ENCODE measurements at regions of chr9 and their contacts with region 1.

Region 1: DNA sequence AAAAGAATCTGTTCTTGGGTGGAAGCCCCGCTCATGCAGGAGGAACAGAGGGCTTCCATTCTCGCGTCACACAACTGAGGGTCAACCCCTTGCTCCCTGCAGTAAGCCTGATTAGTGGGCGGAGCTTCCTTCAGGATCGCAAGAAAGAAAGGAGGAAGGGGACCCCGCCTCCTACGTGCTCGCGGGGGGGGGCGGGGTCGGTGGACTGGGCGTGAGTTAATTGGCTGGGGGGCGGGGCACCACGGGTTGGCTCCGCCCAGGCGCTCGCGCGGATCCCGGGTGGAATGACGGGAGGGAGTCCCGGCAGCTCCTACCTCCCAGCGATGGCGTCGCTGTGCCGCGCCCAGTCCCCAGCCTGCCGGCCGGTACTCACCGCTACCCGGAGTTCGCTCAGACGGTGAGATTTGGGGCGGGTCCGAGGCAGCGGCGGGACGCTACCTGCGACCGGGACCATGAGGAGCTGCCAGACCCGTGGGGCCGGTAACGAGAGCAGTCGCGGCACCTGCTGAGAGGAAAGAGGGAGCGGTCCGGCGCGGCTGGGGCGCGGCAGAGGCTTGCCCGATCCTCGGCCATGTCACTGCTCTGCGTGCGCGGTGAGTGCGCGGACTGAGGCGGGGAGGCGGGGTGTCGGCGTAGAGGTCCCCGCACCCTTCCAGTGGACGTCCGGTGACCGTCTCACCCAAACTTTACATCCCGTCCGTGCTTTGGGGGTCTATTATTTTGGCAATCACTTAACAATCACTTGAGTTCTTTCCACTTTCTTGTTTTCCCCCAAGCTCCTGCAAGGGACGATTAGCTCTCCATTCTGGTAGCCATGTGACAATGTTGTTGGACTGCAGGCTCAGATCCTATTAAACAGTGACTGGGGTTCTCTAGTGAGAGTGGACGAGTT is at the start of gene UNC13B:
- DNase-seq: peak; percentile 96 to 97
- ATAC-seq: peak; percentile 98 to 100 (median 99)
- H3K4me3 ChIP-seq: peak within 1 kb of the TSS; percentile 61 to 93 (median 78)
- H3K27ac ChIP-seq: peak within 1 kb of the TSS; percentile 88 to 98 (median 94)
- H3K4me1 ChIP-seq: peaks cover 0 to 36% (median 21%) of the 10 kb centered on the region in 9 donors
- H3K27me3 ChIP-seq: peaks cover 0 to 6% (median 0%) of the 10 kb centered on the region in 7 donors
- CTCF ChIP-seq: peak in 5 of 9 donors; percentile 20 to 53 (median 39)
- total RNA-seq, gene UNC13B: 13.7 to 27.1 (median 19.9) TPM

Region 2: DNA sequence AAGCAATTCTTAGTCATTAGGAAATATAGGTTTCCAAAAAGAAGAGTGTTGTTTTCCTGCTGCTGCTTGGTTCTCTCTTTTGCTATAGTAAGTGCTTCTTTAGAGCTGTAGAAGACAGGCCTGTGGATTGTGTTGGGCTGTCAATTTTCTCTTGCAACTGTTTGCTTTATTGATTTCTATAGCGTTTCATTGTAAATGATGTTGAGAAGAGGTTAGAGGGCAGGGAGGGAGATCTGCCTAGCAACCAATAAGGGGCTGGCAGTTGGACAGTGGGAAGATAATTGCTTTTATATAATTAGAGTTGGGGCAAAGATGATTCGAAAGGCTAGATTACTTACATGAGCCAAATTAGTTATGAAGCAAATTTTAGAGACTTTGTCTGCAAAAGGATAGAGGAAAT is 10.9 kb after region 1 on chr9:
- intact Hi-C with region 1: loop called in 1 of 10 experiments (anchors 1 kb)
- DNase-seq: no peak
- ATAC-seq: no peak
- H3K4me3 ChIP-seq: no peak overlapping the region
- H3K27ac ChIP-seq: no peak overlapping the region
- H3K4me1 ChIP-seq: peaks cover 0 to 26% (median 8%) of the 10 kb centered on the region in 9 donors
- H3K27me3 ChIP-seq: no peaks in the 10 kb centered on the region
- CTCF ChIP-seq: no peak

Region 3: DNA sequence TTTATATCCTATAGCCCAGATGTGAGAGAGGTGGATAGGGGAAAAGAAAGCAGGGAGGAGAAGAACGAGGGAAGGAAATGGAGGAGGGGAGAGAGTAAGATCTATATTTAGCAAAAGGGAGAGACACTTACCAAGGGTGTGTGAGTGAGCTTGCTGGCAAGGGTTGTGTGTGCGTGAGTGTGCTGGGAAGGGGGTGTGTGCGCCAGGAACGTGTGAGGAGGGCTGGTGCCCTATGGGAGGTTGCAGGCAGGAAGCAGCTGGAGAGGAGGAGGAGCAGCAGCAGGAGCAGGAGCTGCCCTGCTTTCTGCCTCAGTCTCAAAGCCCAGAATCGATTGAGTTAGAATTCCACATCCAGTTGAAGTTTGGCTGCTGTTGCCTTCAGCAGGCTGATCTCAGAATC is 179.6 kb after region 1 on chr9:
- intact Hi-C with region 1: loop called in 1 of 10 experiments (anchors 10 kb)
- DNase-seq: peak; percentile 59 to 70
- ATAC-seq: peak; percentile 76 to 99 (median 94)
- H3K4me3 ChIP-seq: peak overlapping the region in 9 of 10 donors; percentile 12 to 42 (median 33)
- H3K27ac ChIP-seq: peak overlapping the region in 9 of 10 donors; percentile 35 to 70 (median 52)
- H3K4me1 ChIP-seq: peaks cover 5 to 57% (median 33%) of the 10 kb centered on the region in 9 donors
- H3K27me3 ChIP-seq: no peaks in the 10 kb centered on the region
- CTCF ChIP-seq: no peak

Measured in heart right ventricle (tissue), 16 donors.